Mammary epithelial cell (primary cell): ENCODE measurements at regions of chr20 and their contacts with region 1.

Region 1: GRCh38 chr20:64161356-64162238 is 2.7 kb upstream of the MYT1 start:
- DNase-seq: peak; percentile 38
- H3K4me3 ChIP-seq: no peak overlapping the region
- H3K27ac ChIP-seq: no peak overlapping the region
- H3K4me1 ChIP-seq: no peaks in the 10 kb centered on the region
- H3K27me3 ChIP-seq: peaks cover 23% of the 10 kb centered on the region
- CTCF ChIP-seq: no peak

Region 2: DNA sequence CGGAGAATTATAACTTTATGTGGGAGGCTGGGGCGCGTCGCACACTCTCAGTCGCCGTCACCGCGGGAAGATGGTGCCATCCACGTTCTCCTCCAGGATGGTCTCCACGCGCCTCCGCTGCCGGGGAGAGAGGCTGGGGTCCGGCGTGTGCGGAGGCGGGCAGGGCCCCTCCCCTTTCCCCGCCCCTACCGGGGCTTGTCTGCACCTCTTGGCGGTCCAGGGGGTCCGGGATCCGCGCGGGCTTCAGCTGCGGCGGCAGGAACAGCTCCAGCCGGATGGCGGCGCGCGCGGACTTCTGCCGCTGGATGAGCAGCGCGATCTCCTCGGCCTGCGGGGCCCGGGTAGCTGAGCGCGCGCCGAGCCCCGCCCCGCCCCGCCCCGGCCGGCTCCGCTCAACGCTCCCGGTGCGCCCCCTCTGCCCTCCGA is 78.2 kb before region 1 on chr20:
- CTCF ChIA-PET with region 1: no interaction called
- dilution Hi-C with region 1: loop called (anchors 5 kb)
- in situ Hi-C with region 1: no loop called
- intact Hi-C with region 1: no loop called
- DNase-seq: peak; percentile 51
- H3K4me3 ChIP-seq: peak overlapping the region; percentile 36 to 52 (median 45)
- H3K27ac ChIP-seq: no peak overlapping the region
- H3K4me1 ChIP-seq: peaks cover 20% of the 10 kb centered on the region
- H3K27me3 ChIP-seq: peaks cover 7% of the 10 kb centered on the region
- CTCF ChIP-seq: peak; percentile 12 to 64

Region 3: GRCh38 chr20:64216036-64216435 is 54.4 kb after region 1 on chr20:
- CTCF ChIA-PET with region 1: no interaction called
- dilution Hi-C with region 1: loop called (anchors 5 kb)
- in situ Hi-C with region 1: no loop called
- intact Hi-C with region 1: no loop called
- DNase-seq: no peak
- H3K4me3 ChIP-seq: no peak overlapping the region
- H3K27ac ChIP-seq: no peak overlapping the region
- H3K4me1 ChIP-seq: no peaks in the 10 kb centered on the region
- H3K27me3 ChIP-seq: no peaks in the 10 kb centered on the region
- CTCF ChIP-seq: no peak

Region 4: DNA sequence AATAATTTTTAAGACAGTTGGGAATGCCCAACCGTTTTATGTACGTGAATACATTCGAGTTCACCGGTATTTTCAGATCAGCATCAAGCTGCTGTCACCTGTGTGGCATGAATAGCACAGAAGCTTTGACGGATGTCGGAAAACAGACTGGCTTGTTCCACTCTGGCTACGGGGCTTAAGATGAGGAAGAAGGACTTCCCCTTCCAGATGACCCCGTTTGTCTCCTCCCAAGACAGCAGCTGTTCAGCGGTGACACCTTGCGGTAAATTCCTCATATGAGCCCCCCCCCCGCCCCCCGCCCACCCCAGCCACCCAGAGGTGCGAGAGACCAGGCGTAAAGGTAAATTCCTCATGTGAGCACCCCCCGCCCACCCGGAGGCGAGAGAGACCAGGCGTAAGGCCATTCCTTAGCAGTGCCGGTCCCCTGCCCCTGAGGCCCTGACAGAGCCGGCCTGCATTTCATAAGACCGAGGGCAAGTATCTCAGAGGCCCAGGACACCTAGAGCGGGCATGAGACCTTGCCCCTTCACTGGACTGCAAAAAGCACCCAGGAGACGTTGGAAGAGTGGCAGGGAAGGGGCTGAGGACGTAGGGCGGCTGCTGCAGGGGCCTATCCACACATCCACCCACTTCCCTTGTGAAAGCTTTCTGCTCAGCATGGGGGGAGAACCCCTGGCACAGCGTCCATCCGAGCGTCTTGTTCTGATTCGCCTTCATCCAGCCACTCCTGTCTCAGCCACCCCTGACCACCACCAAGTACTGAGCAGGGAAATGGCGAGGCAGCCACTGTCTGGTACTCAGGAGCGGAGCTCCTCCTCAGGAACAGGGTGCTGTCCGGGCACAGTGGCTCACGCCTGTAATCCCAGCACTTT is 86.6 kb after region 1 on chr20:
- CTCF ChIA-PET with region 1: no interaction called
- dilution Hi-C with region 1: loop called (anchors 5 kb)
- in situ Hi-C with region 1: no loop called
- intact Hi-C with region 1: no loop called
- DNase-seq: no peak
- H3K4me3 ChIP-seq: no peak overlapping the region
- H3K27ac ChIP-seq: no peak overlapping the region
- H3K4me1 ChIP-seq: no peaks in the 10 kb centered on the region
- H3K27me3 ChIP-seq: peaks cover 3% of the 10 kb centered on the region
- CTCF ChIP-seq: no peak